ENCODE measurements at regions of chr10 and their contacts with region 1.

Region 1: DNA sequence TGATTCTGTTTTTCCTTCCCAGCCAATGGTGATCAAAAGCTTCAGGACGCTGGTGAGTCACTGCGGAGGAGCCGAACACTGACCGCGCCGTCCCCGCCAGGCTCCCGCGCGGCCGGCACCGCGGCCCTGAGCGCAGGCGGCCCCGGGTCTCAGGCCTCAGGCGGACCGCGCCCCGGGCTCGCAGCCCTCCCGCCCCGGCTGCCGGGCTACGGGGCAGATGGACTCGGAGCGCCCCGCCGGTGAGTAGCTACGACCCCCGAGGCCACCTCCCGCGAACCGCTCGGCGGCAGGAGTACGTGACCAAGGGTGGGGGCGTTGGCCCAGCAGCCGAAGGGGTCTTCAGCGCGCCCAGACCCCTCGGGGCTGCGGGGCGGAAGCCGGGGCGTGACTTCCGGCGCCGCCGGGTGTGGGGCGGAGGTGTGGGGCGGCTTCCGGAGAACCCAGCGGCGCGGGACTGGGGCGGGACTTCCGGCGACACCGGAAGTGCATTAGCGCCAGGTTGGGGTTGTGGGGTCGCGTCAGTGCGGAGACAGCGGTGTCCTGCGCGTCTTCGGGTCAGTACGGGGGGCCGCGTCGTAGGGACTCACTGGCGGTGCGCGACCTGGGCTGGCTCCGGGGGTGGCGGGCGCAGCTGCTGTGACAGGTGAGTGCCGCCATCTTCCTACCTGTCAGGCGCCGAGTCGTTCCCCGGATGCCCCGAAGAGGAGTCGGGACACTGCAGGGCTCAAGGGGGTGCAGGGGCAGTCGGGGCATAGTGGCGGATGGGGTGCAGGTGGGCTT is at the start of gene WDR37:
- DNase-seq: peak; percentile 67 to 96 (median 90)

Region 2: GRCh38 chr10:987870-988666 is 68.4 kb before region 1 on chr10 and contains the start of gene GTPBP4:
- intact Hi-C with region 1: loop called (anchors 1 kb)
- DNase-seq: peak; percentile 97 to 100 (median 99)

Region 3: GRCh38 chr10:1400101-1401070 is 343.9 kb after region 1 on chr10:
- intact Hi-C with region 1: no loop called
- DNase-seq: peak in 11 of 42 donors; percentile 4 to 29 (median 12)